ENCODE measurements at regions of chr12 and their contacts with region 1.

Region 1: DNA sequence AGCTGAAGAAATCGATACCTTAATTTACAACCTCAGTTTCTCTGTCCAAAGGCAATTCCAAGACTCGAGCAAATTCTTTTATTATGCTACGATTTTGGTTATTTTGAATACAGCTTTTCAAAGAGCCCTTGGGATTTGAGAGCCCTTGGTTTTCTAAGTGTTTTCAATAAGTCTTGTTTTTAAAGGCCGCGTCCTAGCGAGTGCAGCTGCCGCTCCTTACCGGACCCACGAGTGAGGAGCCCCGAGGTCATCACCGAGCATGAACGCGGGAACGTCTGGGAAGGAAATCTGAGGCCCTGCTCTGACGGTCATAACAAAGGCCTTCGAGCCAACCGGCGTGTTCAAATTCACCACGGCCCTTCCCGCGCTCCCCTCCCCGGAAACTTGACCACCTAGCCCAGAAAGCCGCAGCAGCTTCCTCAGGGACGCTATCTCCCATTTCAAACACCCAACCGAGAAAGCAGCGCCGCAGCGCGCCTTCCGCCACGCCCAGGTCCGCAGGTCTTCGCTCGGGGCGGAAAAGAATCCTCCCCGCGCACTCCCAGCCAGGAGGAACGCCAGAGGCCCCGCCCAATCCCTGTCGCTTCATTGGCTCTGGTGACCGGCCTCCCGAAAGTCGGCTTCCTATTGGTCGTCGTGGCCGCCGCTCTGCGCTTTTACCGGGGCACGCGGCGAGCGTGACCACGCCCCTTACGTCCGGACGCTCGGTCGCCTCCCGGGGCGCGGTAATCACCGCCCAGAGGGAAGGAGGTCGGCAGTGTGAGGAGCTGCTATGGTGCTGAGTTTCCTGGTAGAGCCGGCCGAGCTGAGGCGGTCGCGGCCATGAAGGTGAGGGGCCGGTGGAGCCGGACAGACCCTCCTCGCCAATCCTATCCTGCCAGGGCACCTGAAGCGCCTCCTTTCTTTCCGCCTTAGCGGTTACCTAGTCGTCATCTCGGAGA is at the start of gene RNF34:
- H3K4me3 ChIP-seq: peak within 1 kb of the TSS; percentile 92
- H3K27ac ChIP-seq: peak within 1 kb of the TSS; percentile 81
- H3K4me1 ChIP-seq: peaks cover 15% of the 10 kb centered on the region
- CTCF ChIP-seq: 0 out of 2 replicates have a peak, but pooled peaks have one; percentile 35

Region 2: DNA sequence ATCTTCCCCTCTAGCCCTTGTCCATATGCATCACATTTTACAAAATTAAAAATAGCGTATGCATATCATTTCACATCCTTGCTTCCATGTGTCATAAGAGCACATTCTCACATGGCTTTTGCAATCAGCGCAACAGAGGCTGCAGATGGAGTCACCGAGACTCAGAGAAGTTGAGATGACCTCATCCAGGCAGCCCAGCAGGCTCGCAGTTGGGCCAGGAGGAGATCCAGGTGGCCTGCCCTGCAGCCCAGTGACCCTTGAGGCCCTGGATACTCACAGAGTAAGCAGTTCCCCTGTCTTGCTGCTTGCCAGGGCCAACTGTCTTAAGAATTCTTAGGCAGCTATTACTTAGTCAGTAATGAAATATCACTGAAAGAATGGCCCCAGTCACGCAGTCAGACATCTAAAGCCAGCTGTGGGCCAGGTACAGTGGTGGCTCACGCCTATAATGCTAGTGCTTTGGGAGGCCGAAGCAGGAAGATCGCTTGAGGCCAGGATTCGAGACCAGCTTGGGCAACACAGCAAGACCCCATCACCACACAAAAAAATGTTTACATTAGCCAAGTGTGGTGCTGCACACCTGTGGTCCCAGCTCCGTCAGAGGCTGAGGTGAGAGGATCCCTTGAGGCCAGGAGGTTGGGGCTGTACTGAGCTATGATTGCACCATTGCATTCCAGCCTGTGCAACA is 112.2 kb before region 1 on chr12:
- CTCF ChIA-PET with region 1: no interaction called
- POLR2A ChIA-PET with region 1: no interaction called
- H3K4me3 ChIP-seq: no peak overlapping the region
- H3K27ac ChIP-seq: no peak overlapping the region
- H3K4me1 ChIP-seq: 0 out of 2 replicates have a peak, but pooled peaks cover 5% of the 10 kb centered on the region
- CTCF ChIP-seq: no peak

Region 3: DNA sequence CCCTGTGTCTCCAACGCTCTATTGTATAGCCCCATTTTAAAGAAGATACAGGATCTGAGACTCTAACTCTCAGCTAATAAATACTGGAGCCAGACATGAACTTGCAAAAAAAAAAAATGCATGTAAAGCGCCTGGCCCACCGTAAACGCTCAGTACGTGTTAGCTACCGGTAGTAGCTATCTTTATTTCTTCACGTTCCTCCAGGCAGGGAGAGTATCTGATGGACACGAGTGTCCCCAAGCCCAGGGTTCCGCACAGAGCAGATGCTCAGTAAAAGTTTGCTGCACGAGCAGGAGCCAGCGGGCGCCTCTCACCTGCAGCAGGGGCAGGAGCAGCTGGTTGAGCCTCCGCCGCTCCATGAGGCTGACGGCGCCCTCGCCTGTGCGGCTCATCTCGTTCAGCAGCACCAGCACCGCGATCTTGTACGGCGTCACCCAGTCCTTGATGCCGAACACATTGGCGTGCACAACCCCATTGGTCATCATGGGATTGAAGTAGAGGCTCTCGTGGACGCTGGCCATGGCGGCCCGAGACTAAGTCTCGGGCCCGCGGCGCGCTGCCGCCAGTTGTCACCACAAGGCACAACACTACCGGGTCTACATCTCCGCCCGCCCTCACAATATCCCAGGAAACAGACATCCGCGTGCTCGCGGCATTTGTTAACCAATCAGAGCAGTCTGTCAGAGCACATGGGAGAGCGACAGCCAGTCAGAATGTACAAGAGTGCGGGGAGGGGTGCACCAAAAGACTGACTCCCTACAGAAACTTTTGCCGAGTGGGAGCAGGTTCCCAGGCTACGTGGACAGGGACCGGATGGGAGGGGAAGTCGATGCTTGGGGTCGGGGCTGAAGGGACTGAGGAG is 47.6 kb before region 1 on chr12 and contains the start of gene ANAPC5:
- CTCF ChIA-PET with region 1: interaction called, 3 read pairs
- POLR2A ChIA-PET with region 1: interaction called, 65 read pairs
- H3K4me3 ChIP-seq: peak within 1 kb of the TSS; percentile 93
- H3K27ac ChIP-seq: peak within 1 kb of the TSS; percentile 72
- H3K4me1 ChIP-seq: no peaks in the 10 kb centered on the region
- CTCF ChIP-seq: peak; percentile 62; the same call in 1 of the 2 replicates

Region 4: DNA sequence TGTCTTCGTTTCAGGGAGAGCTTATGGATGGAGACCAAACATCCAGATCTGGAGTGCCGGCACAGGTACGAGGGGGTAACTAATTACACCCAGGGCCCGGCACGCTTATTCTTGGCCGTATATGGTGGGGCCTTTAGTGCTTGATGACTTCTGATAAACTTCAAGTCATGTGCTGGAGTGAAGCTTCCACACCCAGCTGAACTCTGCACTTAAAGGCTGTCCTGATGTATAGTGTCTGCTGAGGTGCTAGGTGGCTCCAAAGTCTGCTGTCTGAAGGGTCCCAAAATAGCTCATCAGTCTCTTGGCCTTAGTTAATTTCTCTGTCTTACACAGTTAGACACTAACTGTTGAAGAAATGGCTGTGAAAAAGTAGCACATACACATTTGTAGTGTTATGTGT is 18.2 kb after region 1 on chr12:
- CTCF ChIA-PET with region 1: interaction called, 4 read pairs
- POLR2A ChIA-PET with region 1: interaction called, 12 read pairs
- H3K4me3 ChIP-seq: no peak overlapping the region
- H3K27ac ChIP-seq: no peak overlapping the region
- H3K4me1 ChIP-seq: 0 out of 2 replicates have a peak, but pooled peaks cover 2% of the 10 kb centered on the region
- CTCF ChIP-seq: no peak